Right ventricle myocardium superior (tissue), 1 donor: ENCODE measurements at regions of chr19 and their contacts with region 1.

Region 1: GRCh38 chr19:14347999-14348889 is 33.0 kb upstream of the ADGRE5 start:
- DNase-seq: peak; percentile 81
- ATAC-seq: peak; percentile 92

Region 2: DNA sequence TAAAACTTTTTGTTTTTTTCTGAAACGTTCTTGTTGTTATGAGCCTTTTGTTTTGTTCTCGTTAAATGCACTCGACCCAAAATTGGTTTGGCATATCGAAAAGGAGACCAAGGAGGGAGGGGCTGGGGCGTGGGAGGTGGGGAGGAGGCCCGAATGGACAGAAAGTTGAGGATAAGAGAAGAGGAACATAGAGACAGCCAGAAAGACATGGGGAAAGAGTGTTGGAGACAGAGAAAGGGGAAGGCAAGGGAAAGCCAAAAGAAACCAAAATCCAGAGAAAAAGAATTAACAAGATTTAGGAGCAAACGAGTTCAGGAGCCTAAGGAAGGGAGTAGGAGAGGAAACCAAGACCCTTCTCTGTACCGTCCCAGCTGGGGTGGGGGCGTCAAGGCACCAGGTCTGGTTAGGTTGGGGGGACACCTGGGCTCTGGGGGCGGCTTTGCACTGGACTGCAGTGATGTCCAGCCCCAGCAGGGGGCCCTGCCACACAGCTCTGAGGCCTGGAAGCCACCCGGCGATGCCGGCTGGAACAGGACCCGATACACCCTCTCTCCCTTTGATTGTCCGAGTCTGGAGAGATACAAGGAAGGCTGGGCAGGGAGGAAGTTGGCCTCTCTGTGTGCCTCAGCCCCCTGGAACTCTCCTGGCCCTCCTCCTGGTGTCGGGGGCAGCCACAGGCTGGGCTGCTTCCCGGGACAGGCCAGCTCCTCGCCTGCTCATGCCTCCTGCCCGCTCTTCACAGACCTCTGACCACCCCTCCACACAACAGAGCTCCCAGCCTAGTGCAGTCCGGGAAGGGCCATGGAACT is 200.2 kb before region 1 on chr19:
- intact Hi-C with region 1: loop called (anchors 5 kb)
- DNase-seq: peak; percentile 85
- ATAC-seq: peak; percentile 86

Region 3: GRCh38 chr19:14203177-14203576 is 145.1 kb before region 1 on chr19:
- intact Hi-C with region 1: loop called (anchors 10 kb)
- DNase-seq: no peak
- ATAC-seq: no peak

Region 4: GRCh38 chr19:14218620-14219330 is 129.5 kb before region 1 on chr19:
- intact Hi-C with region 1: no loop called
- DNase-seq: no peak
- ATAC-seq: no peak